Prostate gland (tissue), 2 donors: ENCODE measurements at regions of chr5 and their contacts with region 1.

Region 1: DNA sequence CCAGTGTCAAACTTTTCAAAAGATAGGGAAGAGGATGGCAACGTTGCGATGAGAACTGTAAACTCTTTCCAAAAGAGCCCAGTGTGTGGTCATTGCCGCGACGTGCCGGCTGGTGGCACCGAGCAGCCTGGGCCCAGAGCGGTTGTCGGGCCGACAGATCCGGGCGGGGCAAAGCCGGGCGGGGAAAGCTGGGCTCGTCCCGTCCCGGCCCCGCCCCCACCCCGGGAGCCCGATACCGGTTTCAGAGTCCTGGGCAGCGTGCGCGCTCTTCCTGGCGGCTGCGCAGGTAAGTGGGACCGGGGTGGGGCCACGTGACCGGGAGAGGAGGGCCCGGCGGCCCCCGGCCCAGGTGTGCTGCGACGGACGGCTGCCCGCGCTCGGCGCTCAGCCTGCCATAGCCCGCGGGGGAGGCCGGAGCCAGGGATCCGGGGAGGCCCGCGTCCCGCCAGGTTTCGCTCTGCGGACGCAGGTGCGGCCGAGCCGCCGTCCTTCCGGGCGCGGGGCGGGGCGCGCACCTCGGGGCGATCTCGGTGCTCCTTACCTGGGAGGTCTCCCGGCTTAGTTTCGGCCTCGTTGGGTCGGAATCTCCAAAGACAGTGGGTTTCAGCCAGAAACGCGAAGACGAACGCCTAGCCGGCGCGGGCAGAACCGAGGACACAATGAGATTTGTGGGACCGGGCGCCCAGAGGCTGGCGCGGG is at the start of gene MARVELD2:
- DNase-seq: peak; percentile 96
- H3K4me3 ChIP-seq: peak within 1 kb of the TSS; percentile 66 to 79
- H3K27ac ChIP-seq: peak within 1 kb of the TSS; percentile 88
- H3K4me1 ChIP-seq: no peaks in the 10 kb centered on the region
- H3K27me3 ChIP-seq: no peaks in the 10 kb centered on the region
- CTCF ChIP-seq: peak in 3 of 4 experiments; percentile 45 to 71 (median 65)
- POLR2A ChIP-seq: peak; percentile 85
- total RNA-seq, gene MARVELD2: 9.5 to 30.1 TPM

Region 2: GRCh38 chr5:69492391-69492922 is 77.4 kb after region 1 on chr5 and contains the start of gene OCLN:
- intact Hi-C with region 1: loop called (anchors 10 kb)
- DNase-seq: peak; percentile 77
- H3K4me3 ChIP-seq: peak within 1 kb of the TSS; percentile 59 to 85
- H3K27ac ChIP-seq: peak within 1 kb of the TSS; percentile 86
- H3K4me1 ChIP-seq: no peaks in the 10 kb centered on the region
- H3K27me3 ChIP-seq: no peaks in the 10 kb centered on the region
- CTCF ChIP-seq: peak in 2 of 4 experiments; percentile 28 to 32
- POLR2A ChIP-seq: peak; percentile 90
- total RNA-seq, gene OCLN: 20.2 to 26.8 TPM